CD8-positive, alpha-beta T cell (primary cell): ENCODE measurements at regions of chrX and their contacts with region 1.

Region 1: GRCh38 chrX:16786139-16786790 is at the start of gene TXLNG:
- DNase-seq: peak; percentile 83 to 98 (median 94)
- ATAC-seq: peak; percentile 91
- H3K4me3 ChIP-seq: peak within 1 kb of the TSS; percentile 54 to 68
- H3K4me3 Mint-ChIP-seq: peak within 1 kb of the TSS; percentile 96
- H3K27ac ChIP-seq: peak within 1 kb of the TSS; percentile 88 to 91
- H3K27ac Mint-ChIP-seq: peak within 1 kb of the TSS; percentile 87
- H3K4me1 ChIP-seq: peaks cover 4% of the 10 kb centered on the region
- H3K4me1 Mint-ChIP-seq: peaks cover 25% of the 10 kb centered on the region
- H3K27me3 ChIP-seq: no peaks in the 10 kb centered on the region
- H3K27me3 Mint-ChIP-seq: no peaks in the 10 kb centered on the region
- CTCF ChIP-seq: no peak
- total RNA-seq, gene TXLNG: 31.3 to 32.3 TPM

Region 2: DNA sequence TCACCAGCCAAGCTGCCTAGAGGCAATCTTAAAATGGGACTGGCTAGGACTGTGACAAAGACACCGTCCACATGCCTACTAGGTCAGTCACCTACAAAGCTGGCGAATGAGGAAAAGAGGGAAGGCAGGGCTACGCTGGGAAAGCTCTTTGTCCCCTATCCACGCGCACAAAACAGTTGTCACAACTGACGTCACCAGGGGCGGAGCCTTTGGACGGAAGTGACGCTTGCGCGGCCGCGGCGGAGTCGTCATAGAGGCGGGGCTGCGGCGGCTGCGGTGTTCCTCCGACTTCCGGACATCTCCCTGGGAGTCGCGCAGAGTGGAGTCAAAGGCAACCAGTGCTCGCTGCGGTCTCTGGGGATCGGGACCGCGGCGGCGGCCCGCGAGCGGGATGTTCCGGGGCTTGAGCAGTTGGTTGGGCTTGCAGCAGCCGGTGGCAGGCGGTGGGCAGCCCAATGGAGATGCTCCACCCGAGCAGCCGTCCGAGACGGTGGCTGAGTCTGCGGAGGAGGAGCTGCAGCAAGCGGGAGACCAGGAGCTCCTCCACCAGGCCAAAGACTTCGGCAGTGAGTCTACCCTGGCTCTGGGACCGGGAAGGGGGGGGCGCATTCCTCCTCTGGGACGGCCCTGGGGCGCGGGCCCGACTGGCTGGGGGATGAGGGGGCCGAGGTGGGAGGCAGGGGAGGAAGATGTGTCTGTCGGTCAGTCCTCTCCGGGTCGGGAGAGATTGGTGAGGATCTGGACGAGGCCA is 66.8 kb before region 1 on chrX and contains the start of gene SYAP1:
- CTCF ChIA-PET with region 1: interaction called, 3 read pairs
- POLR2A ChIA-PET with region 1: no interaction called
- intact Hi-C with region 1: loop called (anchors 1 to 2 kb)
- DNase-seq: peak; percentile 84 to 99 (median 91)
- ATAC-seq: peak; percentile 84
- H3K4me3 ChIP-seq: peak within 1 kb of the TSS; percentile 61 to 87
- H3K4me3 Mint-ChIP-seq: peak within 1 kb of the TSS; percentile 91
- H3K27ac ChIP-seq: peak within 1 kb of the TSS; percentile 95 to 98
- H3K27ac Mint-ChIP-seq: peak within 1 kb of the TSS; percentile 99
- H3K4me1 ChIP-seq: peaks cover 17% of the 10 kb centered on the region
- H3K4me1 Mint-ChIP-seq: peaks cover 34% of the 10 kb centered on the region
- H3K27me3 ChIP-seq: no peaks in the 10 kb centered on the region
- H3K27me3 Mint-ChIP-seq: no peaks in the 10 kb centered on the region
- CTCF ChIP-seq: no peak
- total RNA-seq, gene SYAP1: 71.1 to 76.5 TPM